ENCODE measurements at regions of chr20 and their contacts with region 1.

Region 1: DNA sequence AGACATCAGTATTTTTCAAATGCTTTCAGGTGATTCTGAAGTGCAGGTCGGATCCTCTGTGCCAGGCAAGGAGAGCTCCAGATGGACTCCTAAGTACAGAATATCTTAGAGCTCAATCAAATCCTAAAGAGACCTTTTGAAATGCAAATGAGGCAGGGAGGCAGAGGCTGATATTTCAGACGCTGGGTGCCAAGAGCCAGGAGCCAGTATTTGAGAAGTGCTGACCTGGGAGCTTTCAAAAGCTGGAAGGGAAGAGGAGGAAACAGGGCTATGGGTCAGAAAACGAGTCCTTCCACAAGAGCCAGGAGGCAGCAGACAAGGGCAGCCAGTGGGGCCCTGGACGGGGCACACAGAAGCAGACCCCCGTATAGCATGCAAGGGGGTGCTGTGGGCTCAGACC is 46.1 kb upstream of the DSN1 start:
- DNase-seq: no peak
- H3K4me3 ChIP-seq: no peak overlapping the region
- H3K27ac ChIP-seq: peak overlapping the region in 2 of 4 donors; percentile 26 to 42
- H3K4me1 ChIP-seq: peaks cover 0 to 28% (median 6%) of the 10 kb centered on the region in 4 donors
- H3K27me3 ChIP-seq: no peaks in the 10 kb centered on the region
- CTCF ChIP-seq: no peak
- EP300 ChIP-seq: no peak
- POLR2A ChIP-seq: no peak

Region 2: DNA sequence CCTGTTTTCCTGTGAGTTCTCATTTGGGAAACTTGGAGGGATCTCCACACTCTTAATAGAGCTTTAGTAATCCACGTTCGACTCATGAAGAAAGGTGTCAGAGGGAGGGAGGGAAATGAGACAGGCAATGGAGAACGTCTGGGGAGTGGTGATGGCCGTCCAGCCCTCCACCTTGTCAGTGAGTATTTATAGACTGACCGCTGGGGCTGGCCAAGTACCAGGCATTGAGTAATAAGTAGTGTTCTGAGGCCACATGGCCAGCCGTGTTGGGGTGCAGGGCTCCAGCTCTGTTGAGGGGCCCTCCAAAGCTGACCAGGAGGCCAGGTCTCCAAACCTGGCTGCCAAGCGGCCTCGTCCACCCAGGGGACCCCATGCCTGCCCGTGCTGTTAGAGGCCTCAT is 34.8 kb before region 1 on chr20:
- in situ Hi-C with region 1: no loop called
- intact Hi-C with region 1: loop called (anchors 5 kb)
- DNase-seq: no peak
- H3K4me3 ChIP-seq: no peak overlapping the region
- H3K27ac ChIP-seq: peak overlapping the region in 1 of 4 donors; percentile 51
- H3K4me1 ChIP-seq: no peaks in the 10 kb centered on the region
- H3K27me3 ChIP-seq: no peaks in the 10 kb centered on the region
- CTCF ChIP-seq: no peak
- EP300 ChIP-seq: no peak
- POLR2A ChIP-seq: no peak